ENCODE measurements at regions of chr17 and their contacts with region 1.

Region 1: GRCh38 chr17:58303971-58304725 is 23.4 kb upstream of the MPO start:
- H3K4me3 ChIP-seq: no peak overlapping the region
- H3K27ac ChIP-seq: no peak overlapping the region
- H3K4me1 ChIP-seq: no peaks in the 10 kb centered on the region
- CTCF ChIP-seq: peak; percentile 69

Region 2: GRCh38 chr17:58289869-58290268 is 14.3 kb before region 1 on chr17:
- CTCF ChIA-PET with region 1: interaction called, 13 read pairs
- POLR2A ChIA-PET with region 1: no interaction called
- H3K4me3 ChIP-seq: no peak overlapping the region
- H3K27ac ChIP-seq: no peak overlapping the region
- H3K4me1 ChIP-seq: peaks cover 7% of the 10 kb centered on the region; the same call in 1 of the 2 replicates
- CTCF ChIP-seq: no peak

Region 3: GRCh38 chr17:58382108-58382871 is 78.1 kb after region 1 on chr17:
- CTCF ChIA-PET with region 1: no interaction called
- POLR2A ChIA-PET with region 1: no interaction called
- H3K4me3 ChIP-seq: no peak overlapping the region
- H3K27ac ChIP-seq: no peak overlapping the region
- H3K4me1 ChIP-seq: peaks cover 14% of the 10 kb centered on the region
- CTCF ChIP-seq: no peak

Region 4: DNA sequence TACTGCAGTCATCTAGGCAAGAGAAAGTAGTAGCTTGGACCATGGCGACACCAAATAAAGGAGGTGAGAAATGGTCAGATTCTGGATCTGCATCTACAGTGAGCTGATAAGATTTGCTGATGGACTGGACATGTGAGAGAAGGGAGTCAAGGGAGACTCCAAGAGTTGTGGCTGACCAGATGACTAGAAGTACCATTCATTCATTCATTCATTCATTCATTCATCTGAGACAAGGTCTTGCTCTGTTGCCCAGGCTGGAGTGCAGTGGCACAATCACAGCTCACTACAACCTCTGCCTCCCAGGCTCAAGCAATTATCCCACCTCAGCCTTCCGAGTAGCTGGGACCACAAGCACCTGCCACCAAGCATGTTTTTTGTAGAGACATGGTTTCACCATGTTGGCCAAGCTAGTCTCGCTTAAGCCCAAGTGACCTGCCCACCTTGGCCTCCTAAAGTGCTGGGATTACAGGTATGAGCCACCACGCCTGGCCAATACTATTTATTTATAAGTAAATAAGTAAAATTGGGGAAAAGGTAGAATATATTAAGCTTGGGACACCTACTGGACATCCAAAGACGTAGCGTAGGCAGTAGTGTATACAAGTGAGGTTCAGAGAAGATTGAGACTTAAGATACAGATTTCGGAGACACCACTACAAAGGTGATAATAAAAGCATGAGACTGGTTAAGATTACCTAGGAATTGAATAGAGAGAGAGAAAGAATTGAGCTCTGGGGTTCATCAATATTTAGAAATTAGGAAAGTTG is 128.8 kb after region 1 on chr17:
- CTCF ChIA-PET with region 1: interaction called, 14 read pairs
- POLR2A ChIA-PET with region 1: no interaction called
- H3K4me3 ChIP-seq: no peak overlapping the region
- H3K27ac ChIP-seq: no peak overlapping the region
- H3K4me1 ChIP-seq: no peaks in the 10 kb centered on the region
- CTCF ChIP-seq: no peak

Region 5: GRCh38 chr17:58447039-58447975 is 143.2 kb after region 1 on chr17:
- CTCF ChIA-PET with region 1: interaction called, 50 read pairs
- POLR2A ChIA-PET with region 1: no interaction called
- H3K4me3 ChIP-seq: no peak overlapping the region
- H3K27ac ChIP-seq: no peak overlapping the region
- H3K4me1 ChIP-seq: no peaks in the 10 kb centered on the region
- CTCF ChIP-seq: peak; percentile 93

Region 6: DNA sequence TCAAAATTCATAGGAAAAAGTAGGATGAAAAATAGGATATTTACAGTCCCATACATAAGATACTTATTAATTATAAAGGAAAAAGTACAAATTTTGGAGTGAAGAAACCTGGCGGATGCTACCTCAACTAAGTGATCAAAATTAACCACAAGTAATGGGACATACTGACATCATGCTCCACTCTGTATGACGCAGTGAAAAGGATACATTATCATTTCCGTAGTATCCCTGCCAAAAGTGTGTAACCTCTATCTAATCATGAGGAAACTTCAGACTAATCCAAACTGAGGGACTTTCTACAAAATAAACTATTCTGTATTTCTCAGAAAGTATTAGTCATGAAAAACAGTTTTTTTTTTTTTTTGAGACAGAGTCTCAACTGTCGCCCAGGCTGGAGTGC is 742.0 kb after region 1 on chr17:
- CTCF ChIA-PET with region 1: no interaction called
- POLR2A ChIA-PET with region 1: no interaction called
- H3K4me3 ChIP-seq: no peak overlapping the region
- H3K27ac ChIP-seq: no peak overlapping the region
- H3K4me1 ChIP-seq: no peaks in the 10 kb centered on the region
- CTCF ChIP-seq: no peak